IMR-90 (cell line): ENCODE measurements at regions of chr1 and their contacts with region 1.

Region 1: GRCh38 chr1:15028102-15028501 is 125.4 kb upstream of the TMEM51 start:
- DNase-seq: peak; percentile 85
- ATAC-seq: peak; percentile 76
- H3K4me3 ChIP-seq: no peak overlapping the region
- H3K27ac ChIP-seq: no peak overlapping the region
- H3K4me1 ChIP-seq: peaks cover 21% of the 10 kb centered on the region
- H3K27me3 ChIP-seq: no peaks in the 10 kb centered on the region
- CTCF ChIP-seq: no peak
- POLR2A ChIP-seq: no peak
- RAD21 ChIP-seq: no peak

Region 2: GRCh38 chr1:14704846-14705245 is 323.3 kb before region 1 on chr1:
- CTCF ChIA-PET with region 1: no interaction called
- POLR2A ChIA-PET with region 1: no interaction called
- dilution Hi-C with region 1: no loop called
- in situ Hi-C with region 1: no loop called
- intact Hi-C with region 1: no loop called
- DNase-seq: no peak
- ATAC-seq: no peak
- H3K4me3 ChIP-seq: no peak overlapping the region
- H3K27ac ChIP-seq: no peak overlapping the region
- H3K4me1 ChIP-seq: no peaks in the 10 kb centered on the region
- H3K27me3 ChIP-seq: no peaks in the 10 kb centered on the region
- CTCF ChIP-seq: no peak
- POLR2A ChIP-seq: no peak
- RAD21 ChIP-seq: no peak

Region 3: GRCh38 chr1:14742181-14742980 is 285.7 kb before region 1 on chr1:
- CTCF ChIA-PET with region 1: no interaction called
- POLR2A ChIA-PET with region 1: no interaction called
- dilution Hi-C with region 1: no loop called
- in situ Hi-C with region 1: no loop called
- intact Hi-C with region 1: loop called (anchors 10 kb)
- DNase-seq: peak; percentile 98
- ATAC-seq: peak; percentile 89
- H3K4me3 ChIP-seq: no peak overlapping the region
- H3K27ac ChIP-seq: peak overlapping the region; percentile 98
- H3K4me1 ChIP-seq: peaks cover 19% of the 10 kb centered on the region
- H3K27me3 ChIP-seq: no peaks in the 10 kb centered on the region; the same call in 1 of the 2 replicates
- CTCF ChIP-seq: no peak
- POLR2A ChIP-seq: no peak
- RAD21 ChIP-seq: peak; percentile 13; the same call in 1 of the 2 replicates

Region 4: GRCh38 chr1:14778898-14779865 is 248.9 kb before region 1 on chr1:
- CTCF ChIA-PET with region 1: interaction called, 3 read pairs
- POLR2A ChIA-PET with region 1: no interaction called
- dilution Hi-C with region 1: no loop called
- in situ Hi-C with region 1: no loop called
- intact Hi-C with region 1: loop called (anchors 1 kb)
- DNase-seq: peak; percentile 15
- ATAC-seq: peak; percentile 77
- H3K4me3 ChIP-seq: no peak overlapping the region
- H3K27ac ChIP-seq: no peak overlapping the region
- H3K4me1 ChIP-seq: no peaks in the 10 kb centered on the region
- H3K27me3 ChIP-seq: no peaks in the 10 kb centered on the region
- CTCF ChIP-seq: peak; percentile 60
- POLR2A ChIP-seq: no peak
- RAD21 ChIP-seq: peak; percentile 70

Region 5: GRCh38 chr1:14826172-14826636 is 201.9 kb before region 1 on chr1:
- CTCF ChIA-PET with region 1: interaction called, 3 read pairs
- POLR2A ChIA-PET with region 1: no interaction called
- dilution Hi-C with region 1: no loop called
- in situ Hi-C with region 1: no loop called
- intact Hi-C with region 1: loop called (anchors 1 kb)
- DNase-seq: peak; percentile 89
- ATAC-seq: peak; percentile 96
- H3K4me3 ChIP-seq: no peak overlapping the region
- H3K27ac ChIP-seq: peak overlapping the region; percentile 79; the same call in 1 of the 2 replicates
- H3K4me1 ChIP-seq: peaks cover 12% of the 10 kb centered on the region; the same call in 1 of the 2 replicates
- H3K27me3 ChIP-seq: peaks cover 4% of the 10 kb centered on the region; the same call in 1 of the 2 replicates
- CTCF ChIP-seq: peak; percentile 46
- POLR2A ChIP-seq: no peak
- RAD21 ChIP-seq: peak; percentile 53

Region 6: GRCh38 chr1:14923727-14924452 is 104.2 kb before region 1 on chr1:
- CTCF ChIA-PET with region 1: interaction called, 15 read pairs
- POLR2A ChIA-PET with region 1: no interaction called
- dilution Hi-C with region 1: no loop called
- in situ Hi-C with region 1: loop called (anchors 5 kb)
- intact Hi-C with region 1: loop called (anchors 1 kb)
- DNase-seq: peak; percentile 71
- ATAC-seq: peak; percentile 73
- H3K4me3 ChIP-seq: peak overlapping the region; percentile 79
- H3K27ac ChIP-seq: peak overlapping the region; percentile 40; the same call in 1 of the 2 replicates
- H3K4me1 ChIP-seq: peaks cover 20% of the 10 kb centered on the region
- H3K27me3 ChIP-seq: no peaks in the 10 kb centered on the region; the same call in 1 of the 2 replicates
- CTCF ChIP-seq: no peak
- POLR2A ChIP-seq: no peak
- RAD21 ChIP-seq: no peak

Region 7: DNA sequence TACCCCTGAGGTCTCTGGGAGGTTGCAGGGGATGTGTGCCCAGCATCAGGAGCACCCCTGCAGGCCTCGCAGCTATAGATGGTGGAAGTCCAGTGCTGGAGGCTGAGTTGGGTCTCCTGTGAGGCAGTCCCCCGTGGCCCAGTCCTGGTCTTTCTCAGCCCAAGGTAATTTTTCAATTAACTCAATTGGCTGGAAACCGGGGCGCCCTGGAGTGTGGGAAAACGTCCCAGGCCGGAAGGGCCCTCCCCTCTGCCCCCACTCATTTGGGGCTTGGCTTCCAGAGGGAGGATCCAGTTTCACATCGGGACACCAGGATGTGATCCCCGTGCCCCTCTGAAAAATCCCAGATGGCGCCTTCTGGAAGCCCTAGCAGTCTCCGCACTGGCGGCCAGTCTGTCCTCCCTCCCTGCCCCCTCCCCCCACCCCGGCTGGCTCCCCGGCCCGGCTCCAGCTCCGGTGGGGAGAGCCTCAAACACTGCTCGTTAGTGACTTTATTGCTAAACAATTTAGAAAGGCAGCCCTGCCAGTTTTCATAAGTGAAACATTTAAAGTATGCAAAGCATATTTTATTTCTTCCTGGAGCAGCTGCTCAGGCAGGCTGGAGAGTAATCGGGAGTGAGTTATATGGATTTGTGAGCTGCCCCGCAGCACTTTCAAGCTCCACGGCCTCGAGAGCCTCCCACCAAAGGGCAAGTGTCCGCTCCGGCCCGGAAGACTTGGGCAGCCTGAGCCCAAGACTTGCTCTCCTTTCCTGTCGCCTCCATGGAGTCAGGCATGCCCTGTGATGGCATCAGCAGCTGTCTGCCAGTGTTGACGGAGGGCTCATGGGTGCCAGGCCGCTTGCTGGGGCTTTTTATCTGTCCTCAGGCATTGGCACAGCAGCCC is 82.7 kb before region 1 on chr1:
- CTCF ChIA-PET with region 1: no interaction called
- POLR2A ChIA-PET with region 1: interaction called, 4 read pairs
- dilution Hi-C with region 1: no loop called
- in situ Hi-C with region 1: no loop called
- intact Hi-C with region 1: loop called (anchors 5 kb)
- DNase-seq: peak; percentile 90
- ATAC-seq: peak; percentile 82
- H3K4me3 ChIP-seq: peak overlapping the region; percentile 47
- H3K27ac ChIP-seq: peak overlapping the region; percentile 100
- H3K4me1 ChIP-seq: peaks cover 42% of the 10 kb centered on the region
- H3K27me3 ChIP-seq: no peaks in the 10 kb centered on the region
- CTCF ChIP-seq: no peak
- POLR2A ChIP-seq: 0 out of 2 replicates have a peak, but pooled peaks have one; percentile 35
- RAD21 ChIP-seq: no peak